CD8-positive, alpha-beta T cell (primary cell): ENCODE measurements at regions of chr7 and their contacts with region 1.

Region 1: GRCh38 chr7:56063882-56064625 is at the start of gene SUMF2:
- DNase-seq: peak; percentile 80 to 95 (median 90)
- ATAC-seq: peak; percentile 90
- H3K4me3 ChIP-seq: peak within 1 kb of the TSS; percentile 79 to 99
- H3K4me3 Mint-ChIP-seq: peak within 1 kb of the TSS; percentile 91
- H3K27ac ChIP-seq: peak within 1 kb of the TSS; percentile 86 to 88
- H3K27ac Mint-ChIP-seq: peak within 1 kb of the TSS; percentile 91
- H3K4me1 ChIP-seq: peaks cover 22% of the 10 kb centered on the region
- H3K4me1 Mint-ChIP-seq: peaks cover 28% of the 10 kb centered on the region
- H3K27me3 ChIP-seq: no peaks in the 10 kb centered on the region
- H3K27me3 Mint-ChIP-seq: no peaks in the 10 kb centered on the region
- CTCF ChIP-seq: no peak
- total RNA-seq, gene SUMF2: 97.8 to 103 TPM

Region 2: DNA sequence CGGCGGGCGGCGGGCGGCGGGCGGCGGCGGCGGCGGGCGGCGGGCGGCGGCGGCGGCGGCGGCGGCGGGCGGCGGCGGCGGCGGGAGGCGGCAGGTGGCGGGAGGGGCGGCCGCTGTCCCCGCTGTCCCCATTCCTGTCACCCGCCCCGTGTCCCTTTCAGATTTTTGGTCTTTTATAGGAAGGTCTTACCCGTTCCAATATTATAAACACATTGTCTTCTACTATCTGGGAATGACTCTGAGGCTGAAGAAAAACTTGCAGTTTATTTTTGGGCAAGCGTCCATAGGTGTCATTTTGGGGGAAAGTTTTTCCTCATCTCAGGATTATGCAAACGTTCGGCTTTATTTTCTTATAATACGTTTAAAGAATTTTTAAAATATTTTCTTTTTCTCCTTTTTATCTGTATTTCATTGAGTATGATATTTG is 176.2 kb before region 1 on chr7:
- CTCF ChIA-PET with region 1: no interaction called
- POLR2A ChIA-PET with region 1: no interaction called
- intact Hi-C with region 1: loop called (anchors 5 kb)
- DNase-seq: peak in 2 of 9 experiments; percentile 5 to 38
- ATAC-seq: peak; percentile 15
- H3K4me3 ChIP-seq: peak overlapping the region in 1 of 2 experiments; percentile 58
- H3K4me3 Mint-ChIP-seq: peak overlapping the region; percentile 86
- H3K27ac ChIP-seq: no peak overlapping the region
- H3K27ac Mint-ChIP-seq: peak overlapping the region; percentile 87
- H3K4me1 ChIP-seq: no peaks in the 10 kb centered on the region
- H3K4me1 Mint-ChIP-seq: peaks cover 8% of the 10 kb centered on the region
- H3K27me3 ChIP-seq: no peaks in the 10 kb centered on the region
- H3K27me3 Mint-ChIP-seq: no peaks in the 10 kb centered on the region
- CTCF ChIP-seq: no peak

Region 3: DNA sequence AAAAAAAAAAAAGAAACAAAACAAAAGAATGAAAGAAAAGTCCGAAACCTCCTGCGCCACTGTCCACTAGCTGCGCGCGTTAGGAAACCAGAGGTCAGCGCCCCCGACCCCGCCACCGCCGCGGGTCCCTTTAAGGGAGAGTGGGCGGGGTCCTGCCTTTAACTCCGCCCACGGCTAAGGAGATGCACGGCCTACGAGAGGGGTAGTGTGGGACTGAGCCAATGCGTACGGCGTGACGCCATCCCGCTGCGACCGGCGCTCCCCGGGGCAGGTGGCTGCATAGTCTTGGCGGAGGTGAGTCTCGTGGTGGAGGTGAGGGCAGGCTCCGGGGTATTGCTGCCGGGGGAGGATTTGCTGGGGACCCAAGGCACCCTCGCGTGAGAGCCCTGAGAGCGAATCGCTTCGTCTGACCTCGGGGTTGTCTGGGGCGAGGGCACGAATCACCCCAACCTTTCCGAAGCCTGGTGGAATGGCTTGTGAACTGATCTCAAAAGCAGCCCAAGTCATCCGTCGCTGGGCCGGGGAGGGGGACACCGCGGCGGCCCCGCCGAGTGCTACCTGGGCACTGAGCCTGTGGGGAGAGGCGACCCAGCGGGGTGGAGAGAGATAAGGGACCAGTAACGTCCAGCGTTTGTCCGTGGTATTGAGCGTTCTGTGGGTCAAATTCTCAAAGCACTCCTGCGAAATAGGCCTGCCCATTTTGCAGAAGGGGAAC is 112.3 kb before region 1 on chr7 and contains the start of gene MRPS17:
- CTCF ChIA-PET with region 1: interaction called, 3 read pairs
- POLR2A ChIA-PET with region 1: no interaction called
- intact Hi-C with region 1: loop called in 1 of 2 experiments (anchors 1 kb)
- DNase-seq: peak; percentile 82 to 96 (median 93)
- ATAC-seq: peak; percentile 99
- H3K4me3 ChIP-seq: peak within 1 kb of the TSS; percentile 71 to 86
- H3K4me3 Mint-ChIP-seq: peak within 1 kb of the TSS; percentile 94
- H3K27ac ChIP-seq: peak within 1 kb of the TSS; percentile 78 to 91
- H3K27ac Mint-ChIP-seq: peak within 1 kb of the TSS; percentile 97
- H3K4me1 ChIP-seq: peaks cover 6% of the 10 kb centered on the region
- H3K4me1 Mint-ChIP-seq: peaks cover 26% of the 10 kb centered on the region
- H3K27me3 ChIP-seq: no peaks in the 10 kb centered on the region
- H3K27me3 Mint-ChIP-seq: no peaks in the 10 kb centered on the region
- CTCF ChIP-seq: no peak
- total RNA-seq, gene MRPS17: 7.8 to 8.9 TPM

Region 4: DNA sequence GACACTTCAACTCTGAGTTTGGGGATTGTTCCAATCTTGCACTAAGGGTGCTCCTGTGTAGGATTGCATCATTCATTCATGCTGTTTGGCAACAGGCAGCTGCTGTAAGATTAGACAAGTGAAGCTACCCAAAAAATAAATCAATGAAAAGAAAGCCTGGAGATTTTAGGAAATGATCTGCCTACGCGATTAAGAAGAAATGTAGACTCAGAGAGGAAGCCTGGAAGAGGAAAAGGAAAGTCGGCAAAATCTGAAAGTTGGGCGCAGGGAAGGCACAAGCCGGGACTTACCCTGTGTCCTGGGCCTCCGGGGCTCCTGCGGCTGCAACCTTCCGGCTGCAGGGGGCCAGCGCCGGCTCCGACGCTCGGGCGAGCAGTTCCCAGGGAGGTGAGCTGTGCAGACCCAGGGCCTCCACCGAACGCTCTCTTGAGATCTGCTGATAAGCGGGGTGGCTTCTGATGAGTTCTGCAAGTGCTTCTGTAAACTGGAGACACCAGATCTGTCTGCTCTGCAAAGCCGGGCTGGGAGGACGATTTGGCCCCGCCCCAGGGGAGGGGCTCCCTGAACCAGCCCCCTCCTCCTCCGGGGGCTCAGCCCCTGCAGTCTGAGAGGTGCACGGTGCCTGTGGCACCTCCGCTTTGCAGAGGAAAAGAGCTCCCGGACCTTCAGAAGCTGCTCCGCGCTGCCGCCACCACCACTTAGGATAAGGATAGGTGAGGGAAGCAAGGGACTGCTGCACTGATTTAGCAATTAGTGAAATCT is 30.2 kb before region 1 on chr7:
- CTCF ChIA-PET with region 1: interaction called, 5 read pairs
- POLR2A ChIA-PET with region 1: interaction called, 5 read pairs
- intact Hi-C with region 1: loop called (anchors 1 kb)
- DNase-seq: peak; percentile 46 to 85 (median 73)
- ATAC-seq: peak; percentile 99
- H3K4me3 ChIP-seq: peak overlapping the region; percentile 49 to 73
- H3K4me3 Mint-ChIP-seq: peak overlapping the region; percentile 86
- H3K27ac ChIP-seq: no peak overlapping the region
- H3K27ac Mint-ChIP-seq: peak overlapping the region; percentile 72
- H3K4me1 ChIP-seq: peaks cover 3% of the 10 kb centered on the region
- H3K4me1 Mint-ChIP-seq: peaks cover 9% of the 10 kb centered on the region
- H3K27me3 ChIP-seq: no peaks in the 10 kb centered on the region
- H3K27me3 Mint-ChIP-seq: no peaks in the 10 kb centered on the region
- CTCF ChIP-seq: no peak

Region 5: GRCh38 chr7:56051339-56052191 is 12.5 kb before region 1 on chr7 and contains the starts of genes CCT6A and PSPH:
- CTCF ChIA-PET with region 1: interaction called, 6 read pairs
- POLR2A ChIA-PET with region 1: interaction called, 25 read pairs
- intact Hi-C with region 1: loop called (anchors 1 kb)
- DNase-seq: peak; percentile 64 to 95 (median 88)
- ATAC-seq: peak; percentile 86
- H3K4me3 ChIP-seq: peak within 1 kb of the TSS; percentile 72 to 81
- H3K4me3 Mint-ChIP-seq: peak within 1 kb of the TSS; percentile 92
- H3K27ac ChIP-seq: peak within 1 kb of the TSS; percentile 62 to 83
- H3K27ac Mint-ChIP-seq: peak within 1 kb of the TSS; percentile 95
- H3K4me1 ChIP-seq: peaks cover 29% of the 10 kb centered on the region
- H3K4me1 Mint-ChIP-seq: peaks cover 47% of the 10 kb centered on the region
- H3K27me3 ChIP-seq: no peaks in the 10 kb centered on the region
- H3K27me3 Mint-ChIP-seq: no peaks in the 10 kb centered on the region
- CTCF ChIP-seq: no peak
- total RNA-seq, gene CCT6A: 36.3 to 40.9 TPM
- total RNA-seq, gene PSPH: 0.89 to 1.1 TPM

Region 6: GRCh38 chr7:56074371-56074791 is 10.3 kb after region 1 on chr7:
- CTCF ChIA-PET with region 1: interaction called, 26 read pairs
- POLR2A ChIA-PET with region 1: interaction called, 5 read pairs
- intact Hi-C with region 1: no loop called
- DNase-seq: peak; percentile 31 to 76 (median 65)
- ATAC-seq: peak; percentile 83
- H3K4me3 ChIP-seq: no peak overlapping the region
- H3K4me3 Mint-ChIP-seq: no peak overlapping the region
- H3K27ac ChIP-seq: no peak overlapping the region
- H3K27ac Mint-ChIP-seq: no peak overlapping the region
- H3K4me1 ChIP-seq: no peaks in the 10 kb centered on the region
- H3K4me1 Mint-ChIP-seq: peaks cover 5% of the 10 kb centered on the region
- H3K27me3 ChIP-seq: no peaks in the 10 kb centered on the region
- H3K27me3 Mint-ChIP-seq: no peaks in the 10 kb centered on the region
- CTCF ChIP-seq: peak; percentile 79

Region 7: DNA sequence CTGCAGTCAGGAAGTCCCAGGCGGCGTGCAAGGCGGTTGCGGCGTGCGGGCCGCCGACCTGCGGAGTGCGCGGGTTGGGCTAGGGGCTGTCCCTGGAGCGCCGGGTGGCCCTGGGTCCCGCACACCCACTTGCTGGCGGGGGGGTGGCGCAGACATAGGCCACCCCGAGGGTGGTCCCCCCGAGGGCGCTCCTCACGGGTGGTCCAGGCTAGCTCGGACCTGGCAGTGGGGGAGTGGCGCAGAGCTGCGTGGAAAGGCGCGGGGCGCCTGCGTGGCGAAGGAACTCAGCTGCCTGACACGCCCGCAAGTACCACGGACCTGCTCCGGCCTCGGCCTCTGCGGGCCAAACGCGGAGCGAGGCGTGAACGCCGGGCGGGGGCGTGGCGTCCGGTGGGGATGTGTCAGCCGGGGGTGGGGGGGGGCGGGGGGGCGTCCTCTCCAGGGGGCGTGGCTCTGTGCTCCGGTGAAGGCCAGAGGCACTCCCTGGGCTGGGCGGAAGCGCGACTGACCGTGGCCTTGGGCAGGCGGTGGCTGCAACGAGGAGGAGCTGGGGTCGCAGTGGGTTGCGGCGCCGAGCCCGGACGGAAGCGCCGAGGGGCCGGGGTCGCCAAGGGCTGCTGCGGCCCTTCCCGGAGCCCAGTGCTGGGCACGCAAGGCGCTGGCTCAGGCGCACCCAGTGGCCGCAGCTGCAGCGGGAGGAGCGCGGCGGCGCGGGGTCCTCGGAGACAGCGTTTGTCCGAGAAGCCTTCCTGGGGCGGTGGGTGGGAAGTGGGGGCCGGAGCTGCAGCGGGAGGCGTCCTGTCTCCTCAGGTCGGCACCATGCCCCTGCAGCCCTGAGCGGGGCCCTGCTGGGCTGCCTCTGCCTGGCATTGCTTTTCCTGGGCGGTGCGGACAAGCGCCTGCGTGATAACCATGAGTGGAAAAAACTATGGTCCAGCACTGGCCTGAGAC is 111.0 kb after region 1 on chr7:
- CTCF ChIA-PET with region 1: no interaction called
- POLR2A ChIA-PET with region 1: no interaction called
- intact Hi-C with region 1: no loop called
- DNase-seq: peak in 1 of 9 experiments; percentile 1
- ATAC-seq: no peak
- H3K4me3 ChIP-seq: no peak overlapping the region
- H3K4me3 Mint-ChIP-seq: no peak overlapping the region
- H3K27ac ChIP-seq: no peak overlapping the region
- H3K27ac Mint-ChIP-seq: no peak overlapping the region
- H3K4me1 ChIP-seq: no peaks in the 10 kb centered on the region
- H3K4me1 Mint-ChIP-seq: no peaks in the 10 kb centered on the region
- H3K27me3 ChIP-seq: no peaks in the 10 kb centered on the region
- H3K27me3 Mint-ChIP-seq: peaks cover 22% of the 10 kb centered on the region
- CTCF ChIP-seq: no peak